ENCODE measurements at regions of chr1 and their contacts with region 1.

Region 1: GRCh38 chr1:12184008-12184681 is 17.4 kb downstream of the TNFRSF1B start:
- DNase-seq: no peak
- ATAC-seq: no peak
- H3K4me3 Mint-ChIP-seq: no peak overlapping the region
- H3K27ac Mint-ChIP-seq: peak overlapping the region; percentile 25
- H3K4me1 Mint-ChIP-seq: peaks cover 60% of the 10 kb centered on the region
- H3K27me3 Mint-ChIP-seq: no peaks in the 10 kb centered on the region
- CTCF ChIP-seq: no peak

Region 2: GRCh38 chr1:12052008-12052573 is 132.1 kb before region 1 on chr1:
- CTCF ChIA-PET with region 1: no interaction called
- POLR2A ChIA-PET with region 1: no interaction called
- intact Hi-C with region 1: no loop called
- DNase-seq: peak; percentile 62
- ATAC-seq: peak; percentile 46
- H3K4me3 Mint-ChIP-seq: no peak overlapping the region
- H3K27ac Mint-ChIP-seq: no peak overlapping the region
- H3K4me1 Mint-ChIP-seq: peaks cover 37% of the 10 kb centered on the region
- H3K27me3 Mint-ChIP-seq: peaks cover 9% of the 10 kb centered on the region
- CTCF ChIP-seq: no peak

Region 3: DNA sequence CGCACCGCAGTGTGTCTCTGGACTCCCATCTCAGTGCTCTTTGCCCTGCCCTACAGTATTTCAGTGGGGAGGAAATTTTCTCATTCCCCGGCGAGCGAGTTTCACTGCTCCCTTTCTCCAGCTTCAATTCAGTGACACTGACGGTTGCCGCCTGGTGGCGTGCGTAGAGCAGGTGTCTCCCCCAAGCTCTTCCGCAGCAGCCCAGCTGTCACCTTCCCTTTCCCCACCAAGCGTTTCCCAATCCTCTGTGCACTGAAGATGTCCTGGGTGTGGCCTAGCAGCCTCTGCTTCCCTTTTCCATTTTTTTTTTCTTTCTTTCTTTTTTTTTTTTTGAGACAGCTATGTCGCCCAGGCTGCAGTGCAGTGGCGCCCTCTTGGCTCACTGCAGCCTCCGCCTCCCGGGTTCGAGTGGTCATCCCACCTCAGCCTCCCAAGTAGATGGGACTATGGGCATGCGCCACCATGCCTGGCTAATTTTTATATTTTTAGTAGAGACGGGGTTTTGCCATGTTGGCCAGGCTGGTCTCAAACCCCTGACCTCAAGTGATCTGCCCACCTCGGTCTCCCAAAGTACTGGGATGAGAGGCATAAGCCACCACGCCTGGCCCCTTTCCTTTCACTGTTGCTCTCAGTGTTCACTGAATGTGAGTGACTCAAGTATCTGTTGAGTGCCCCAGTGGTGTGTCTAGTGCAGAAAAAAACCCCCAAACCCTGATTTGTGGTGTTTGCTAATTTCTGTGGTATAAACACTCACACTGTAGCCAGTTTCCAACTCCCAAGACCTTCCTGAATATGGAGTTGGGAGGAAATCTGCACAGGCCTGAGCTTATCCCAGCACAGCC is 12.7 kb after region 1 on chr1:
- CTCF ChIA-PET with region 1: interaction called, 3 read pairs
- POLR2A ChIA-PET with region 1: interaction called, 47 read pairs
- intact Hi-C with region 1: no loop called
- DNase-seq: no peak
- ATAC-seq: peak; percentile 15
- H3K4me3 Mint-ChIP-seq: no peak overlapping the region
- H3K27ac Mint-ChIP-seq: no peak overlapping the region
- H3K4me1 Mint-ChIP-seq: peaks cover 67% of the 10 kb centered on the region
- H3K27me3 Mint-ChIP-seq: no peaks in the 10 kb centered on the region
- CTCF ChIP-seq: no peak